ENCODE measurements at regions of chr11 and their contacts with region 1.

Region 1: DNA sequence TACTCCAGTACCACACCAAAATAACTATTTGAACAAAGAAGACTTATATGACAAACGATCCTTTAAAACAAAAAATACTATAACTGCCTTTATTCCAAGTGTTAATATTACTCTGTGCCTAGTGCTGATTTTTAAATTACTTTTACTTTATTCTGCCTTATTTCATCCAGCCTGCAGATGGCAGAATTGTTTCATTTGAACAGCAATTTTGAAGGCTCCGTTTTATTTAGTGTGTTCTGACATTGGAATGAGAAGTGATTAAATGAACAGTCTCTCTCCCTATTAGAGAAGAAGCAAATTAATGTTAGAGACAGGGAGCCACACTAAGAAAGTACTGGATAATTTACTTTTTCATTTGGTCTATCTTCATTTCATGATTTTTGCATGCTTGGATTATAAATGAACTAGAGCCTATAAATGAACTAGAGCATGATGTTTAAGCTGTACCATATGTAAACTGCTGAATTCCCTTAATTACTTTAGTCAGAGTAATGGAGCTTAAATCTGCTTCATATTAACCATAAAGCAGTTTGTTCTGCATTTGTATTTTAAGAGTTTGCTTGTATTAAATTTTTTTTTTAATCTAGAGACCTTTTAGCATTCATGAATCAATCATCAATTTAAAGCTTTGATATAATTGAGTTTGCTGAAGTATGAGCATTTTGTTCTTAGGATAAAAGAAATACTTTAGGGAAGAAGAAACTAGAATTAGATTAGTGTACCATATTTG is 9.8 kb downstream of the PDHX start:
- DNase-seq: peak; percentile 34
- H3K4me3 ChIP-seq: peak overlapping the region in 1 of 2 experiments; percentile 7; a peak in 1 of 4 replicates
- H3K27ac ChIP-seq: peak overlapping the region; percentile 63 to 67; a peak in 3 of 4 replicates
- H3K4me1 ChIP-seq: peaks cover 11 to 30% of the 10 kb centered on the region in 2 experiments; a peak in 2 of 4 replicates
- H3K27me3 ChIP-seq: no peaks in the 10 kb centered on the region
- CTCF ChIP-seq: peak; percentile 91
- EP300 ChIP-seq: 0 out of 4 replicates have a peak, but pooled peaks of 1 of the 2 experiments have one; percentile 2
- RAD21 ChIP-seq: peak; percentile 92

Region 2: GRCh38 chr11:34899633-34900016 is 26.6 kb before region 1 on chr11:
- CTCF ChIA-PET with region 1: no interaction called
- POLR2A ChIA-PET with region 1: no interaction called
- DNase-seq: no peak
- H3K4me3 ChIP-seq: no peak overlapping the region
- H3K27ac ChIP-seq: no peak overlapping the region
- H3K4me1 ChIP-seq: no peaks in the 10 kb centered on the region
- H3K27me3 ChIP-seq: no peaks in the 10 kb centered on the region
- CTCF ChIP-seq: no peak
- EP300 ChIP-seq: no peak
- RAD21 ChIP-seq: no peak

Region 3: DNA sequence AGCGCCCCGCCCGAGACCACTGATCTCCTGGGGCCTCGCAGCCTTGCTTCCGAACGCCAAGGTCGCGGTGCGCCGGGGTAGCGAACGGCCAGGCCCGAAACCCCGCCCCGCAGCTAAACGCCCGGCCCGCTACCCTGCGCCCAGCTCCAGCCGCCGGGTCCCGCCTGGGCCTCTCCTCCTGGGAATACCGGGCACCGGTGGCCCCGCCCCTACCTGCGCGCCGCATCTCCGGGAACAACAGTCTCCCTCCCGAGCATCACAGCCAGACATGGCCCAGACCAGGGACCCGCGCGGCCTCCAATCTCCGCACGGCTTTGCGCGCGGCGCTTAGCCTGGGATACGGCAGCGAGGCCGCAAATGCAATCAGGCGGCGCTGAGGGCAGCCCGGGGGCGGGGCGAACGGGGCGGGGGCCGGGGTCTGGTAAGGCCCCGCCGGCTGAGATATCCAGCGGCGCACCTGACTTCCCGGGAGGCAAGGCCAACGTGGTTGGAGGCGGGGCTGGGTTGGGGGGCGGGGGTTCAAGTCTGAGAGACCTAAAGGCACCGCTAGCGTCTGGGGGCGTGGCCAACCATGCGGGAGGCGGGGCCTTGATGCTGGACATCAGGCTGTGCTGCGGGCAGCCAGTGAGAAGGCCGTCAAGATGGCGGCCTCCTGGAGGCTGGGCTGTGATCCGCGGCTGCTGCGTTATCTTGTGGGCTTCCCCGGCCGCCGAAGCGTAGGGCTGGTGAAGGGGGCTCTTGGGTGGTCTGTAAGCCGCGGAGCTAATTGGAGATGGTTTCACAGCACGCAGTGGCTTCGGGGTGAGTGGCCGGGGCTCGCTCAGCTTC is 10.0 kb before region 1 on chr11 and contains the starts of genes APIP and PDHX:
- CTCF ChIA-PET with region 1: interaction called, 24 read pairs
- POLR2A ChIA-PET with region 1: no interaction called
- DNase-seq: peak; percentile 98
- H3K4me3 ChIP-seq: peak within 1 kb of the TSS; percentile 65 to 97
- H3K27ac ChIP-seq: peak within 1 kb of the TSS; percentile 90 to 98
- H3K4me1 ChIP-seq: peaks cover 12 to 13% of the 10 kb centered on the region in 2 experiments; a peak in 3 of 4 replicates
- H3K27me3 ChIP-seq: no peaks in the 10 kb centered on the region
- CTCF ChIP-seq: no peak
- EP300 ChIP-seq: no peak
- RAD21 ChIP-seq: no peak
- polyA plus RNA-seq, gene APIP: 21.3 and 22.5 TPM in 2 replicates
- polyA plus RNA-seq, gene PDHX: 14.8 and 19.1 TPM in 2 replicates

Region 4: GRCh38 chr11:35237860-35238715 is 311.8 kb after region 1 on chr11:
- CTCF ChIA-PET with region 1: interaction called, 14 read pairs
- POLR2A ChIA-PET with region 1: no interaction called
- DNase-seq: peak; percentile 15
- H3K4me3 ChIP-seq: no peak overlapping the region
- H3K27ac ChIP-seq: no peak overlapping the region; a peak in 1 of 4 replicates
- H3K4me1 ChIP-seq: peaks cover 0 to 2% of the 10 kb centered on the region in 2 experiments; a peak in 2 of 4 replicates
- H3K27me3 ChIP-seq: no peaks in the 10 kb centered on the region
- CTCF ChIP-seq: peak; percentile 73
- EP300 ChIP-seq: no peak
- RAD21 ChIP-seq: peak; percentile 78

Region 5: DNA sequence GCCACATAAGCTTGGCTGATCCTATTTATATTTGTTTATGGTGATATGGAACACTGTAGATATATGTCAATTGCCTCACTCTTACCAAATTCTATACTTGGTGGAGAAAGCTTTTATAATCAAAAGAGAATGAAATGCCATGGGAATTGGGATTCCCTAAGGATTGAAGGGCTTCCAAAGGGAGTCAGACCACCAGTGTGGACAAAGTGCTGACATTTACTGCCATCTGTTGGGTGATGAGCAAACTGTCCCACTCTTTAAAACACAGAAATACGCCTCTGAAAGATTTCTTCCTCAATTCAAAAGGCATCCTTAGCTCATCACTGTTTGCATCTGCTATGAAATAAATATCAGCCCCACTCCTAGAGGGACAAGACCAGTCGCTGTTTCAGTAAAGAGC is 486.0 kb after region 1 on chr11:
- CTCF ChIA-PET with region 1: interaction called, 14 read pairs
- POLR2A ChIA-PET with region 1: no interaction called
- DNase-seq: peak; percentile 63
- H3K4me3 ChIP-seq: no peak overlapping the region; a peak in 1 of 4 replicates
- H3K27ac ChIP-seq: no peak overlapping the region
- H3K4me1 ChIP-seq: no peaks in the 10 kb centered on the region
- H3K27me3 ChIP-seq: peaks cover 31% of the 10 kb centered on the region; the same call in 1 of the 2 replicates
- CTCF ChIP-seq: peak; percentile 62
- EP300 ChIP-seq: no peak
- RAD21 ChIP-seq: peak; percentile 75

Measured in SK-N-SH (cell line).